ENCODE measurements at regions of chr5 and their contacts with region 1.

Region 1: GRCh38 chr5:144203750-144204596 is 33.3 kb downstream of the KCTD16 start:
- DNase-seq: peak in 1 of 2 experiments; percentile 79
- ATAC-seq: peak; percentile 63 to 75; a peak in 4 of 6 replicates
- H3K4me3 ChIP-seq: no peak overlapping the region
- H3K27ac ChIP-seq: no peak overlapping the region
- H3K4me1 ChIP-seq: peaks cover 25% of the 10 kb centered on the region
- CTCF ChIP-seq: peak; percentile 91
- EP300 ChIP-seq: no peak
- POLR2A ChIP-seq: no peak
- RAD21 ChIP-seq: peak; percentile 91 to 93

Region 2: GRCh38 chr5:143182901-143183820 is 1020.8 kb before region 1 on chr5:
- CTCF ChIA-PET with region 1: no interaction called
- POLR2A ChIA-PET with region 1: no interaction called
- DNase-seq: peak in 1 of 2 experiments; percentile 23
- ATAC-seq: peak; percentile 38 to 56; a peak in 3 of 6 replicates
- H3K4me3 ChIP-seq: no peak overlapping the region
- H3K27ac ChIP-seq: peak overlapping the region in 1 of 2 experiments; percentile 31; a peak in 1 of 6 replicates
- H3K4me1 ChIP-seq: peaks cover 14% of the 10 kb centered on the region
- CTCF ChIP-seq: no peak
- EP300 ChIP-seq: no peak
- POLR2A ChIP-seq: no peak
- RAD21 ChIP-seq: 0 out of 5 replicates have a peak, but pooled peaks of 1 of the 2 experiments have one; percentile 15

Region 3: DNA sequence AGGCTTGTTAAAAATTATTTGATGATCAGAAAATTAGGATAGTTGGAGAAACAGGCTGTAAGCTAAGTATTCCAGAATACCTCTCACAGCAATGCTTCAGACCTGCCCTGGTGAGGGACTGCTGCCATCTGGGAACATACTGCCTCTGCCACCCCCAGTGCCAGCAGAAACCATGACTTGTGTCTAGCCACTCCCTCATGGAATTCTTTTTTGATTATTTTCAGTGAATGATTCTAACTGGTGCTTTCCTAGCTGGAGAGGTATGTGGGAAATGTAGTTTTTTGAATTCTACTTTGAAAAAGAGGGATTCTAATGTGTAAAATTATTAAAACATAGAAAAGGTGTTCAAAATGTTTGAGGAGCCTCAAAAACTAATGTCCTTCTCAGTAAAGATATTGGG is 265.7 kb before region 1 on chr5:
- CTCF ChIA-PET with region 1: no interaction called
- POLR2A ChIA-PET with region 1: no interaction called
- DNase-seq: no peak
- ATAC-seq: peak in 1 of 2 experiments; percentile 43; a peak in 1 of 6 replicates
- H3K4me3 ChIP-seq: no peak overlapping the region
- H3K27ac ChIP-seq: no peak overlapping the region
- H3K4me1 ChIP-seq: peaks cover 8% of the 10 kb centered on the region; the same call in 2 of the 3 replicates
- CTCF ChIP-seq: no peak
- EP300 ChIP-seq: no peak
- POLR2A ChIP-seq: no peak
- RAD21 ChIP-seq: no peak

Region 4: GRCh38 chr5:144191998-144192397 is 12.0 kb before region 1 on chr5:
- CTCF ChIA-PET with region 1: interaction called, 29 read pairs
- POLR2A ChIA-PET with region 1: no interaction called
- DNase-seq: peak; percentile 49 to 91
- ATAC-seq: peak; percentile 57 to 65; a peak in 5 of 6 replicates
- H3K4me3 ChIP-seq: no peak overlapping the region
- H3K27ac ChIP-seq: peak overlapping the region; percentile 67 to 80
- H3K4me1 ChIP-seq: peaks cover 69% of the 10 kb centered on the region
- CTCF ChIP-seq: peak; percentile 72
- EP300 ChIP-seq: no peak
- POLR2A ChIP-seq: no peak
- RAD21 ChIP-seq: peak; percentile 72 to 86

Region 5: DNA sequence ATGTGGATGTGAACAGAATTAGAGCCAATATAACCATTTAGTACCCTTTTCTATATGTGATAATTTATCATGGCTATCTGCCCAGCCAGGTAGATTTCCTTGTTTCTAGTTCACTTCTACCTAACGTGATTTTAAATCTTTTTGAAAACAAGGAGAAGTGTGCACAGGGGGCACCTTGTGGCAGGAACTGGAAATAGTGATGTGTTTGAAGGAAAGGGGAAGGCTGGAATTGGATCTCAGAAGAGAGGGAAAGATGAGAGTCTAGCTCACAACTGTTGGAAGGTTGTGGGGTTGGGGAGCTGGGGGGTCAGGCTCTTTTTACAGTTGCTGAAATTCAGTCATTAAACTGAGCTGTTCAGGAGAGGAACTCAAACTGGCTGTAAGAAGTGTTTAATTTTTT is 186.2 kb after region 1 on chr5:
- CTCF ChIA-PET with region 1: interaction called, 21 read pairs
- POLR2A ChIA-PET with region 1: no interaction called
- DNase-seq: peak; percentile 3 to 9
- ATAC-seq: peak in 1 of 2 experiments; percentile 79; a peak in 3 of 6 replicates
- H3K4me3 ChIP-seq: no peak overlapping the region
- H3K27ac ChIP-seq: no peak overlapping the region
- H3K4me1 ChIP-seq: no peaks in the 10 kb centered on the region
- CTCF ChIP-seq: no peak
- EP300 ChIP-seq: no peak
- POLR2A ChIP-seq: no peak
- RAD21 ChIP-seq: peak in 1 of 2 experiments; percentile 44; a peak in 1 of 5 replicates

Region 6: GRCh38 chr5:145237843-145238242 is 1033.9 kb after region 1 on chr5:
- CTCF ChIA-PET with region 1: interaction called, 11 read pairs
- POLR2A ChIA-PET with region 1: no interaction called
- DNase-seq: peak in 1 of 2 experiments; percentile 56
- ATAC-seq: peak; percentile 43 to 89; a peak in 4 of 6 replicates
- H3K4me3 ChIP-seq: no peak overlapping the region
- H3K27ac ChIP-seq: no peak overlapping the region
- H3K4me1 ChIP-seq: no peaks in the 10 kb centered on the region
- CTCF ChIP-seq: peak; percentile 46
- EP300 ChIP-seq: no peak
- POLR2A ChIP-seq: no peak
- RAD21 ChIP-seq: peak; percentile 35 to 67; a peak in 3 of 5 replicates

Region 7: GRCh38 chr5:146049014-146049703 is 1845.2 kb after region 1 on chr5:
- CTCF ChIA-PET with region 1: interaction called, 21 read pairs
- POLR2A ChIA-PET with region 1: no interaction called
- DNase-seq: peak; percentile 76 to 81
- ATAC-seq: peak; percentile 86 to 94
- H3K4me3 ChIP-seq: no peak overlapping the region
- H3K27ac ChIP-seq: peak overlapping the region in 1 of 2 experiments; percentile 52; a peak in 2 of 6 replicates
- H3K4me1 ChIP-seq: peaks cover 5% of the 10 kb centered on the region; the same call in 2 of the 3 replicates
- CTCF ChIP-seq: peak; percentile 91
- EP300 ChIP-seq: no peak
- POLR2A ChIP-seq: no peak
- RAD21 ChIP-seq: peak; percentile 96 to 97